Mammary epithelial cell (primary cell): ENCODE measurements at regions of chr18 and their contacts with region 1.

Region 1: DNA sequence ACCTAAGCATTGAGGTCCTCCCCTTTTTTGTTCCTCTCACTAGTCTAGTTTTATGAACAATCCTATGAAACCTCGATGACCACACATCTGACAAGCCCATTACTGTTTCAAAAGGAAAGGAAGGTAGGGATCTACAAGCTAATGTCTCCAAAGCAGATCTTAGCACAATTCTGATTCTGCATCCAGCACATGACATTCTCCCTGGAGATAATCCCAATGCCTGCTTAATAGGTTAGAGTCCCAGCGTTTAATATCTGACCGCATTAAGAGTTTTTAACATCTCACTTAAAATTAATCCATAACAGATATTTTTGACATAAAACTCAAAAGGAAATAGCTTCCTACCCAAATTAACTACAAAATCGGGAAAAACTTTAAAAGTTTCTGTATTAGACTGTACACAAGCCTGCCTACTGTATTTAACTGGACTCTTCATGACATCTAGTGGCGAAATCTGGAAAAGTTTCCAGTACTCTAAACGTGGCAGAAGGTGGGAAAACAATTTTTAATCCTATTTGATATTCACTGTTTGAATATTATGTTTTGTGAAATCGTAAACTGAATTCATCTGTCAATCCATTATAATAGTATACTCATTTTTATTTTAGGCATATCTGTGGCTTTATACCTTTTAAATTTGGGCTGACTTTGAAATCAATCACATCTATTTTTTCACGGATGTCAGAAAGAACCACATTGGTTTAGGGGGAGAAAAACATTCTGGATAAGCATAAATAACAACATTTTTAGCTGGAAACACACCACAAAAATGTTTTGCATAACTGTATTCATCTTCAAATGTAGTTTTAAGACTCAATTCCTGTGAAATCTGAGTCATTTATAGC is 62.4 kb downstream of the TXNL1 start:
- DNase-seq: peak; percentile 20
- H3K4me3 ChIP-seq: no peak overlapping the region
- H3K27ac ChIP-seq: no peak overlapping the region
- H3K4me1 ChIP-seq: no peaks in the 10 kb centered on the region
- H3K27me3 ChIP-seq: no peaks in the 10 kb centered on the region
- CTCF ChIP-seq: peak; percentile 53 to 67

Region 2: GRCh38 chr18:55096261-55096951 is 1479.6 kb before region 1 on chr18:
- CTCF ChIA-PET with region 1: no interaction called
- dilution Hi-C with region 1: no loop called
- in situ Hi-C with region 1: no loop called
- intact Hi-C with region 1: loop called (anchors 5 kb)
- DNase-seq: peak; percentile 62
- H3K4me3 ChIP-seq: no peak overlapping the region
- H3K27ac ChIP-seq: no peak overlapping the region
- H3K4me1 ChIP-seq: peaks cover 13% of the 10 kb centered on the region
- H3K27me3 ChIP-seq: no peaks in the 10 kb centered on the region
- CTCF ChIP-seq: peak; percentile 35 to 70

Region 3: GRCh38 chr18:55343396-55344073 is 1232.5 kb before region 1 on chr18:
- CTCF ChIA-PET with region 1: no interaction called
- dilution Hi-C with region 1: no loop called
- in situ Hi-C with region 1: no loop called
- intact Hi-C with region 1: loop called (anchors 10 kb)
- DNase-seq: peak; percentile 8
- H3K4me3 ChIP-seq: no peak overlapping the region
- H3K27ac ChIP-seq: no peak overlapping the region
- H3K4me1 ChIP-seq: no peaks in the 10 kb centered on the region
- H3K27me3 ChIP-seq: no peaks in the 10 kb centered on the region
- CTCF ChIP-seq: peak; percentile 49 to 55

Region 4: DNA sequence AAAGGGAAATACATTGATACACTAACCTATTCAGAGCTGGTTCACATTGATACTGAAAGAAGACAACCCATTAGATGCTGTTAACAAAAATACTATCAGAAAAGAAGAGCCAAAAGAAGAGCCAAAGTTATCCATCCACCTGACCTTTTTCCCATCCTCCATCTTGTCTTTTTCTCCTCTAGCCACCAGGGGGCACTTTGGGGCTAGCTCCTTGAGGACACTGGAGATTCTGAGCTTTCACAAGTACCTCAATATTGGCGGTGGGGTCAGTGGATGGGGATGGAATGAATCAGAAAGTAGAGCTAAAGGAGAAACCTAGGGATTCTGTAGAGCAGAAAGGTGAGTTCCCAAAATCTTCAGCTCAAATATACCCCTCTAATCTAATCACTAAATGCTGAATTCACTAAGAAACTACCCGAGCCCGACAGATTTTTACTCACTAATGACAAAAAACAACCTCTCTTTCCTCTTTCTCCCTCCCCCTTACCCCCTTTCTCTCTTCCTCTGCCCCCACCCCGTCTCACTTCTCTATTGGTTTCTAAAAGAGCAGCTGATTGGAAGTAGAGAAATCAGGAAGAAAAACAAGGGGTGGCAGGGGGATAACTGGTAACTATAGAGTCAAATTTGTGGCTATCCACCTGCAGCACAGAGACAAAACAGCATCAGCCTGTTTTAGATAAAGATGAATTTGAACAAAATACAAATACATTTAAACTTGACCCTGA is 1191.3 kb before region 1 on chr18:
- CTCF ChIA-PET with region 1: no interaction called
- dilution Hi-C with region 1: no loop called
- in situ Hi-C with region 1: no loop called
- intact Hi-C with region 1: loop called (anchors 10 kb)
- DNase-seq: peak; percentile 32
- H3K4me3 ChIP-seq: no peak overlapping the region
- H3K27ac ChIP-seq: no peak overlapping the region
- H3K4me1 ChIP-seq: no peaks in the 10 kb centered on the region
- H3K27me3 ChIP-seq: no peaks in the 10 kb centered on the region
- CTCF ChIP-seq: peak; percentile 73 to 80

Region 5: GRCh38 chr18:55790296-55790695 is 785.7 kb before region 1 on chr18:
- CTCF ChIA-PET with region 1: no interaction called
- dilution Hi-C with region 1: no loop called
- in situ Hi-C with region 1: no loop called
- intact Hi-C with region 1: loop called (anchors 10 kb)
- DNase-seq: peak; percentile 72
- H3K4me3 ChIP-seq: no peak overlapping the region
- H3K27ac ChIP-seq: no peak overlapping the region
- H3K4me1 ChIP-seq: peaks cover 17% of the 10 kb centered on the region
- H3K27me3 ChIP-seq: no peaks in the 10 kb centered on the region
- CTCF ChIP-seq: no peak

Region 6: DNA sequence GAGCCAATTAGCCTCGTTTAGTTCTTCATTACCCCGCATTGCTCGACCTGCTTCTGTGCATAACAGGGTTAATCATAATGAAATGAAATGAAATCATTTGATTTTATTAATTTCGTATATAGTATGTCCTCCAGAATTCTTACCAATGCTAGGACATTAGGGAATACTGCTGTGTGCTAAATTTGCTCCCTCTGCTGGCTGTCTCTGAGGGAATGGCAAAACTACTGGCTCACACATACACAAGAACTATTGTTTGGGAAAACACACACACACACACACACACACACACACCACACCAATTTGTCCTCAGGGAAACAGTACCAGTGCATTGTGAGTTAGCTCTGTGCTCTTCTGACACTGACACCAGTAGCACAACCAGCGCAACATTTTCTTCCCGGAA is 714.8 kb before region 1 on chr18:
- CTCF ChIA-PET with region 1: no interaction called
- dilution Hi-C with region 1: no loop called
- in situ Hi-C with region 1: no loop called
- intact Hi-C with region 1: loop called (anchors 5 kb)
- DNase-seq: peak; percentile 49
- H3K4me3 ChIP-seq: no peak overlapping the region
- H3K27ac ChIP-seq: no peak overlapping the region
- H3K4me1 ChIP-seq: peaks cover 12% of the 10 kb centered on the region
- H3K27me3 ChIP-seq: no peaks in the 10 kb centered on the region
- CTCF ChIP-seq: peak; percentile 54 to 73

Region 7: DNA sequence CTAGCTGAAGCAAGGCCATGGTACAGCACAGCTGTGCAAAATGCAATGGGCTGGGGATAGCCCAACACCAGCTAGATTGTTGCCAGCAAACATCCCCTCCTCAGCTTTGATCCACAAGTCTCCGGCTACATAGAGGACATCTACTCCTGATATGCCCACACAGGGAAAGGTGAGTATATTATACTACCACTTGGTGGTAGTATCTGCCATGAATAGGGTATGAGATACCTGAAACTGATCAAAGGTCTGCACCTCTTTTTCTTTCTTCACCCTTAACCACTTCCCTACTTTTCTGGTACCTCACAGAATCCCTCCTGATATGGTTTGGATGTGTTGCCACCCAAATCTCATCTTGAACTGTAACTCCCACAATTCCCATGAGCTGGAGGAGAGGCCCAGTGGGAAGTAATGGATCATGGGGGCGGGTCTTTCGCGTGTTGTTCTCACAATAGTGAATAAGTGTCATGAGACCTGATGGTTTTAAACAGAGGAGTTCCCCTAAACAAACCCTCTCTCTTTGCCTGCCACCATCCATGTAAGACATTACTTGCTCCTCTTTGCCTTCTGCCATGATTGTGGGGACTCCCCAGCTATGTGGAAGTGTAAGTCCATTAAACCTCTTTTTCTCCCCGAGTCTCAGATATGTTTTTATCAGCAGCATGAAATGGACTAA is 217.3 kb before region 1 on chr18:
- CTCF ChIA-PET with region 1: no interaction called
- dilution Hi-C with region 1: no loop called
- in situ Hi-C with region 1: loop called (anchors 5 kb)
- intact Hi-C with region 1: loop called (anchors 1 kb)
- DNase-seq: peak; percentile 20
- H3K4me3 ChIP-seq: no peak overlapping the region
- H3K27ac ChIP-seq: no peak overlapping the region
- H3K4me1 ChIP-seq: no peaks in the 10 kb centered on the region
- H3K27me3 ChIP-seq: no peaks in the 10 kb centered on the region
- CTCF ChIP-seq: peak; percentile 23 to 59